ENCODE measurements at regions of chr2 and their contacts with region 1.

Region 1: DNA sequence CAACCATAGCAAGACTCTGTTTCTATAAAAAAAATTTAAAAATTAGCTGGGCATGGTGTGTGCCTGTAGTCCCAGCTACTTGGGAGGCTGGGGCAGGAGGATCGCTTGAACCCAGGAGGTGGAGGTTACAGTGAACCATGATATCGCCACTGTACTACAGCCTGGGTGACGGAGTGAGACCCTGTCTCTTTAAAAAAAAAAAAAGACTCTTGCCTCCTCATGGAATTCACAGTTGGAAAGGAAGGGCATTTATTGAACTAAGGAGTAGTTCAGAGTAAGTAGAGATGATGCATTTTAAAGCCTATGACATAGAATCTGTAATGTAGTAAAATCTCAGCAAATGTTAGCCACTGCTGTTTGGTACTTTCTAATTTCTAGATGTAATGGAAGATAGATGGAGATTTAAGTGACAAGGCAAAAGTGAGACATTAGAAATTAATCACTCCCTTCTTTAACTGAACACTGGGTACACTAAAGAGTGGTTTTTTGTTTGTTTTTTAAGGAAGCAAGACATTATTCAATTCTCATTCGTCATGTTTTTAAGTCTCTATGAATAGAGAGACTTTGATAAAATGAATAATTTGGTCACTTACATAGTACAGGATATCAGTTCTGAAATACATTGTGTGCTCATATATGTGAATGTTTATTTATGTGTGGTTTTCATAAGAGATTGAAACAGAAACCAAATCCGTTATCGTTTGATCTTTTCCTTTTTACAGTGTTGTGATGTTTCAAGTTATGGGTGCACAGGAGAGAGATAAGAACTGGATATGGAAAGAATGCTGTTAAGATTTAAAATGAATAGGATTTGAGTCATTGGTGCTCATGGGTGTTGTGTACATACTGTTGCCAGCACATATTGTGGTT is 186.1 kb upstream of the STON1 start:
- DNase-seq: no peak
- H3K4me3 ChIP-seq: peak overlapping the region in 58 of 59 donors; percentile 5 to 62 (median 40)
- H3K27ac ChIP-seq: peak overlapping the region in 58 of 59 donors; percentile 18 to 95 (median 87)
- H3K27me3 ChIP-seq: no peaks in the 10 kb centered on the region
- CTCF ChIP-seq: peak in 1 of 56 donors; percentile 5

Region 2: DNA sequence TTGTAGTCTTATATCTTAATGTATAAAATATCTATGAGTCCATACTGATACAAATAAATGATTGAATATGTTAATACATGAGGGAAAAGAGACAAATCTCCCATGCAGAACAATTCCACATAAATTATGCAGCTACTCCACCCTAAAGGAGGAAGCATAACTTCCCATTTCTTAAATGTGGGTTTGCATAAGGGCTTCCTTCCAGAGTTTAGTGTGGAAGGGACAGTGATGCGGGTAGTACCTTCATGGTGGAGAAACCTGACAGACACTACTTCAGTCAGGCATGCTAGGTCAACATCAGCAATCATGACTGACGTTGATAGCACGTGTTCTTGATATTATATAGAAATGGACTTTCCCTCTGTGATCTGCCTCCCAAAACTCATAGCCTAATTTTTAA is 39.2 kb after region 1 on chr2:
- intact Hi-C with region 1: no loop called
- DNase-seq: no peak
- H3K4me3 ChIP-seq: no peak overlapping the region
- H3K27ac ChIP-seq: no peak overlapping the region
- H3K27me3 ChIP-seq: no peaks in the 10 kb centered on the region
- CTCF ChIP-seq: no peak

Region 3: DNA sequence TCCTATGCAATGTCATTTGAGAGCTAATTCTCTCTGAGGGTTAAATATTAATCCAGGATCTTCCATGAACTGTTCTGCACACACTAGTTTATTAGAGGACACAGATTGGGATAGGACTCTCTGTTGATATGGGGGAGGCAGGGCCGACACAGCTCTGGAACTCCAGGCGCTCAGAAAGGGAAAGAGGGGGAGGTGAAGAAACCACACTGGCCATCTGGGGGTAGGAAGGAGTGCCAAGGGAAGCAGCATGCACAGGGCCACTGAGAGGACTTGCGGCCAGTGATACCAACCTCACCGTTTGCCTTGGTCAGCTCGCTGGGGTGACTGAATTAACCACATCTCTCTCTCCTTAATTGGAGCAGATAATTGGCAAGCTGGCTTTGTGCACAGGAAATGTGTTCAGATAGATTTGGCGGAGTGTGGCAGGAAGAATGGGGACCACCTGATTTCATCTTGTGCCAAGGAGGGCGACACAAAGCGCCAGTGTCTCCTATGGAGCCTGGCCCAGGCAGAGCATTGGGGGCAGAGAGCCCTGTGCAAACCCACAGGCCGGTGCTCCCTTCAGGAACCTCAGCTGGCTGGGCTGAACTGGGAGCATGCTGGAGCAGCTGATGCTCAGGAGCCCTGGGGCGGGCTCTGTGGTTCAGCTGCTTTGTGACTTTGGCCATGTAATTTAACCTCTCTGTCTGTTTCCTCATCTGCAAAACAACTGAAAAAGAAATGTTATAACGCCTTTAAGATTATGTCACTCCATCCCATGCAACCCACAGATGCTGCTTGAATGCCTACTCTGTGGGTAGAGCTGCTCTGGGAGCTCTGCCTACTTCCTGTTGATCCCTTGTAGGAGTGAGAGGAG is 71.4 kb after region 1 on chr2:
- intact Hi-C with region 1: loop called in 1 of 2 experiments (anchors 5 kb)
- DNase-seq: peak; percentile 62 to 94 (median 81)
- H3K4me3 ChIP-seq: peak overlapping the region in 45 of 59 donors; percentile 1 to 57 (median 27)
- H3K27ac ChIP-seq: peak overlapping the region; percentile 45 to 98 (median 92)
- H3K27me3 ChIP-seq: no peaks in the 10 kb centered on the region
- CTCF ChIP-seq: peak in 8 of 56 donors; percentile 2 to 32 (median 24)